ENCODE measurements at regions of chr3 and their contacts with region 1.

Region 1: GRCh38 chr3:57597122-57597923 is at the start of gene ARF4:
- DNase-seq: peak; percentile 97 to 100 (median 99)
- ATAC-seq: peak; percentile 87 to 93 (median 92)
- H3K4me3 ChIP-seq: peak within 1 kb of the TSS; percentile 89 to 99
- H3K4me3 Mint-ChIP-seq: peak within 1 kb of the TSS; percentile 88 to 97 (median 90)
- H3K27ac ChIP-seq: peak within 1 kb of the TSS; percentile 99
- H3K27ac Mint-ChIP-seq: peak within 1 kb of the TSS; percentile 98 to 99
- H3K4me1 ChIP-seq: peaks cover 15 to 33% of the 10 kb centered on the region in 2 experiments
- H3K4me1 Mint-ChIP-seq: peaks cover 51 to 68% (median 61%) of the 10 kb centered on the region in 3 donors
- H3K27me3 ChIP-seq: no peaks in the 10 kb centered on the region
- H3K27me3 Mint-ChIP-seq: no peaks in the 10 kb centered on the region
- total RNA-seq, gene ARF4: 44.7 to 71.5 (median 47.3) TPM

Region 2: GRCh38 chr3:55629432-55629831 is 1967.9 kb before region 1 on chr3:
- CTCF ChIA-PET with region 1: no interaction called
- POLR2A ChIA-PET with region 1: no interaction called
- DNase-seq: no peak
- ATAC-seq: no peak
- H3K4me3 ChIP-seq: no peak overlapping the region
- H3K4me3 Mint-ChIP-seq: no peak overlapping the region
- H3K27ac ChIP-seq: no peak overlapping the region
- H3K27ac Mint-ChIP-seq: no peak overlapping the region
- H3K4me1 ChIP-seq: no peaks in the 10 kb centered on the region
- H3K4me1 Mint-ChIP-seq: no peaks in the 10 kb centered on the region
- H3K27me3 ChIP-seq: no peaks in the 10 kb centered on the region
- H3K27me3 Mint-ChIP-seq: peaks cover 0 to 2% of the 10 kb centered on the region in 2 donors

Region 3: GRCh38 chr3:56667973-56668579 is 929.2 kb before region 1 on chr3:
- CTCF ChIA-PET with region 1: no interaction called
- POLR2A ChIA-PET with region 1: interaction called in 1 of 2 experiments, 19 read pairs
- DNase-seq: no peak
- ATAC-seq: peak in 2 of 4 experiments; percentile 39 to 53
- H3K4me3 ChIP-seq: no peak overlapping the region
- H3K4me3 Mint-ChIP-seq: no peak overlapping the region
- H3K27ac ChIP-seq: peak overlapping the region; percentile 25
- H3K27ac Mint-ChIP-seq: peak overlapping the region; percentile 25 to 68
- H3K4me1 ChIP-seq: peaks cover 0 to 8% of the 10 kb centered on the region in 2 experiments
- H3K4me1 Mint-ChIP-seq: peaks cover 23 to 37% (median 36%) of the 10 kb centered on the region in 3 donors
- H3K27me3 ChIP-seq: no peaks in the 10 kb centered on the region
- H3K27me3 Mint-ChIP-seq: no peaks in the 10 kb centered on the region

Region 4: GRCh38 chr3:57411715-57412114 is 185.6 kb before region 1 on chr3:
- CTCF ChIA-PET with region 1: no interaction called
- POLR2A ChIA-PET with region 1: no interaction called
- DNase-seq: no peak
- ATAC-seq: no peak
- H3K4me3 ChIP-seq: no peak overlapping the region
- H3K4me3 Mint-ChIP-seq: no peak overlapping the region
- H3K27ac ChIP-seq: no peak overlapping the region
- H3K27ac Mint-ChIP-seq: no peak overlapping the region
- H3K4me1 ChIP-seq: no peaks in the 10 kb centered on the region
- H3K4me1 Mint-ChIP-seq: no peaks in the 10 kb centered on the region
- H3K27me3 ChIP-seq: no peaks in the 10 kb centered on the region
- H3K27me3 Mint-ChIP-seq: peaks cover 10 to 15% of the 10 kb centered on the region in 2 donors

Region 5: GRCh38 chr3:57555738-57556458 is 41.4 kb before region 1 on chr3 and contains the start of gene PDE12:
- CTCF ChIA-PET with region 1: interaction called in 1 of 2 experiments, 6 read pairs
- POLR2A ChIA-PET with region 1: interaction called, 5 to 47 read pairs
- DNase-seq: peak; percentile 47 to 87 (median 73)
- ATAC-seq: peak; percentile 78 to 83 (median 82)
- H3K4me3 ChIP-seq: peak within 1 kb of the TSS; percentile 90 to 97
- H3K4me3 Mint-ChIP-seq: peak within 1 kb of the TSS; percentile 86 to 90 (median 87)
- H3K27ac ChIP-seq: peak within 1 kb of the TSS; percentile 87
- H3K27ac Mint-ChIP-seq: peak within 1 kb of the TSS; percentile 99
- H3K4me1 ChIP-seq: peaks cover 18 to 36% of the 10 kb centered on the region in 2 experiments
- H3K4me1 Mint-ChIP-seq: peaks cover 40 to 51% (median 44%) of the 10 kb centered on the region in 3 donors
- H3K27me3 ChIP-seq: no peaks in the 10 kb centered on the region
- H3K27me3 Mint-ChIP-seq: no peaks in the 10 kb centered on the region
- total RNA-seq, gene PDE12: 23.0 to 32.5 (median 26.7) TPM

Region 6: GRCh38 chr3:57755668-57756527 is 158.6 kb after region 1 on chr3 and contains the start of gene SLMAP:
- CTCF ChIA-PET with region 1: interaction called in 1 of 2 experiments, 6 read pairs
- POLR2A ChIA-PET with region 1: interaction called, 3 to 10 read pairs
- DNase-seq: peak; percentile 90 to 100 (median 96)
- ATAC-seq: peak; percentile 93 to 95 (median 94)
- H3K4me3 ChIP-seq: peak within 1 kb of the TSS; percentile 87 to 94
- H3K4me3 Mint-ChIP-seq: peak within 1 kb of the TSS; percentile 94 to 98 (median 95)
- H3K27ac ChIP-seq: peak within 1 kb of the TSS; percentile 75
- H3K27ac Mint-ChIP-seq: peak within 1 kb of the TSS; percentile 88 to 93
- H3K4me1 ChIP-seq: peaks cover 18 to 28% of the 10 kb centered on the region in 2 experiments
- H3K4me1 Mint-ChIP-seq: peaks cover 42 to 45% (median 43%) of the 10 kb centered on the region in 3 donors
- H3K27me3 ChIP-seq: peaks cover 0 to 3% of the 10 kb centered on the region in 2 experiments
- H3K27me3 Mint-ChIP-seq: no peaks in the 10 kb centered on the region
- total RNA-seq, gene SLMAP: 57.4 to 78.8 (median 72.3) TPM

Measured in T-cell (primary cell).